SK-N-SH (cell line): ENCODE measurements at regions of chr22 and their contacts with region 1.

Region 1: GRCh38 chr22:22181341-22181850 is 63.2 kb upstream of the VPREB1 start:
- DNase-seq: no peak
- H3K4me3 ChIP-seq: no peak overlapping the region
- H3K27ac ChIP-seq: no peak overlapping the region
- H3K4me1 ChIP-seq: no peaks in the 10 kb centered on the region
- H3K27me3 ChIP-seq: peaks cover 28% of the 10 kb centered on the region
- CTCF ChIP-seq: no peak
- EP300 ChIP-seq: no peak
- RAD21 ChIP-seq: no peak

Region 2: GRCh38 chr22:22168190-22168940 is 13.0 kb before region 1 on chr22:
- CTCF ChIA-PET with region 1: interaction called, 12 read pairs
- POLR2A ChIA-PET with region 1: no interaction called
- DNase-seq: peak; percentile 16
- H3K4me3 ChIP-seq: peak overlapping the region; percentile 31 to 51; a peak in 2 of 4 replicates
- H3K27ac ChIP-seq: no peak overlapping the region
- H3K4me1 ChIP-seq: no peaks in the 10 kb centered on the region; a peak in 1 of 4 replicates
- H3K27me3 ChIP-seq: no peaks in the 10 kb centered on the region; the same call in 1 of the 2 replicates
- CTCF ChIP-seq: no peak
- EP300 ChIP-seq: no peak
- RAD21 ChIP-seq: no peak

Region 3: DNA sequence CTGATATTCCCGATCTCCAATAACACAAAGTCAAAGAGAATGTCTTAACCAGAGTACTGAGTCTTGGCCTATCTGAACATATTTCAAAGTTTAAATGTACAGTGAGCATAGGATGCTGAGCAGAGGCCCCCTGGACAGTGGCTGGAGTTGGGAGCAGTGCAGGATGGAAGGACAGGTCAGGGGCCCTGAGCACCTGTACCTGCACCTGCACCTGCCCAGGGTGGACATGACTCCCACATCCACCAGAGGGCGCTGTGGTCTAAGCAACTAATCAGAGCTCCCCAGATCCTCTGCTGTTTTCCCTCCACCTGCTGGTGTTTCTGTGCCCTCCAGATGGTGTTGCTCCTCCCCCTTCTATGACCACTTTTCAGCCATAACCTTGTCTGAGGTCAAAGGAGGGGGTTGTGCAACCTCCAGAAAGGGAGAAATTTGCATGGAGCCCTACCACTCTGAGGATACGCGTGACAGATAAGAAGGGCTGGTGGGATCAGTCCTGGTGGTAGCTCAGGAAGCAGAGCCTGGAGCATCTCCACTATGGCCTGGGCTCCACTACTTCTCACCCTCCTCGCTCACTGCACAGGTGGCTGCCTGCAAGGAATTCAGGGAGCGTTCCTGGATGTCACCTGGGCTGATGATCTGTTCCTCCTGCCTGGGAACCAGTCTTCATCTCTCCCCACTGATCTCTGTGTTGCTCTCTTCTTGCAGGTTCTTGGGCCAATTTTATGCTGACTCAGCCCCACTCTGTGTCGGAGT is 14.0 kb after region 1 on chr22:
- CTCF ChIA-PET with region 1: interaction called, 47 read pairs
- POLR2A ChIA-PET with region 1: no interaction called
- DNase-seq: peak; percentile 70
- H3K4me3 ChIP-seq: peak overlapping the region in 1 of 2 experiments; percentile 47; a peak in 1 of 4 replicates
- H3K27ac ChIP-seq: no peak overlapping the region
- H3K4me1 ChIP-seq: no peaks in the 10 kb centered on the region
- H3K27me3 ChIP-seq: peaks cover 27% of the 10 kb centered on the region; the same call in 1 of the 2 replicates
- CTCF ChIP-seq: peak; percentile 83
- EP300 ChIP-seq: no peak
- RAD21 ChIP-seq: peak; percentile 63